Heart right ventricle (tissue), 16 donors: ENCODE measurements at regions of chr9 and their contacts with region 1.

Region 1: DNA sequence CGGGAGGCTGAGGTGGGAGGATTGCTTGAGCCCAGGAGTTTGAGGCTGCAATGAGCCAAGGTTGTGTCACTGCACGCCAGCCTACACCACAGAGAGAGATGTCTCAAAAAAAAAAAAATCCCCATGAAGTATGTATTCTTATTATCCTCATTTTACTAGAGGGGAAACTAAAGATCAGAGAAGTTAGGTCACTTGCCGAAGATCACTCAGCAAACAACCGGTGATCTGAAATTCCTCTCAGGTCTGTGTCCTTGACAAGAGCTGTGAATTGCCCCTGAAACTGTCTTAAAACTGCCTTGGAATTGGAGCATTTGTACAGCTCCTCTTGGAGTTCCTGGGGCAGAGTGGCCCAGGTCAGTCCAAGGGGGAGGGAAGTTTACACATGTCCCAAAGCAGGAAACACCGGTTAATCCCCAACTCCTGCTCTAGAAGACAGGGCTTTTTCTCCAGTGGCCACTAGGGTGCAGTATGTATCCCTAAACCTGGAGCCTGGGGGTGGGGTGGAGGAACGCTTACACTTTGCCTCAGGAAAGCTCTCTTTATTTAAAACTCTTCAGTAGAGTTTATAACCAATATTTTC is 27.6 kb downstream of the AQP7 start:
- DNase-seq: peak in 1 of 2 donors; percentile 87
- ATAC-seq: peak; percentile 63 to 92 (median 82)
- H3K4me3 ChIP-seq: peak overlapping the region in 6 of 10 donors; percentile 6 to 30 (median 22)
- H3K27ac ChIP-seq: peak overlapping the region in 6 of 10 donors; percentile 2 to 79 (median 54)
- H3K4me1 ChIP-seq: peaks cover 5 to 29% (median 18%) of the 10 kb centered on the region in 9 donors
- H3K27me3 ChIP-seq: no peaks in the 10 kb centered on the region
- CTCF ChIP-seq: peak; percentile 72 to 94 (median 88)

Region 2: DNA sequence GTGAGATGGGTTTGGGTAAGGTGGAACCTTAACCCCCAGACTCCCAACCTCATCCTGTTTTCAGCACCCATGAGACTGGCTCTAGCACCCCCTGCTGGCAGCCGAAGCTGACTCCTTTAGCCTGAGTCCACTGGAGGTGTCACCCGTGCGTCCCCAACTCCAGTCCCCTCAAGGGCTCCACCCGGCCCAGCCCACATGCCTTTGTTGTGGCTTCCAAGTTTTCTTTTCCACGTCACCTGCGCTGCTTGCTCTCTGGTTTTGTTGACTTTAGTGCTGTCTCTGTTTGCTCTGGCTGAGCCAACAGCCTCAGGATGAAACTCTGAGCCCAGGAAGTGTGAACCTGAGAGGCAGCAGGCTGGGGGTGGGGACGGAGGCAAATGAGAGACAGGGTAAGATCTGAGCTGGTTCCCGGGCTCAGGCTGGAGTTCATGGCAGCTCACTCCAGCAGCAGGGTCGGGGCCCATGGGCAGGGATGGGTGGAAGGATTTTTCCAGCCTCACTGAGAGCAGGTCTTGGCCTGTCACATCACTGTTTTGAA is 40.8 kb after region 1 on chr9:
- intact Hi-C with region 1: loop called in 9 of 10 experiments (anchors 1 to 5 kb)
- DNase-seq: peak; percentile 71 to 81
- ATAC-seq: peak; percentile 77 to 89 (median 84)
- H3K4me3 ChIP-seq: no peak overlapping the region
- H3K27ac ChIP-seq: no peak overlapping the region
- H3K4me1 ChIP-seq: peaks cover 4 to 14% (median 8%) of the 10 kb centered on the region in 9 donors
- H3K27me3 ChIP-seq: no peaks in the 10 kb centered on the region
- CTCF ChIP-seq: peak; percentile 42 to 86 (median 79)

Region 3: DNA sequence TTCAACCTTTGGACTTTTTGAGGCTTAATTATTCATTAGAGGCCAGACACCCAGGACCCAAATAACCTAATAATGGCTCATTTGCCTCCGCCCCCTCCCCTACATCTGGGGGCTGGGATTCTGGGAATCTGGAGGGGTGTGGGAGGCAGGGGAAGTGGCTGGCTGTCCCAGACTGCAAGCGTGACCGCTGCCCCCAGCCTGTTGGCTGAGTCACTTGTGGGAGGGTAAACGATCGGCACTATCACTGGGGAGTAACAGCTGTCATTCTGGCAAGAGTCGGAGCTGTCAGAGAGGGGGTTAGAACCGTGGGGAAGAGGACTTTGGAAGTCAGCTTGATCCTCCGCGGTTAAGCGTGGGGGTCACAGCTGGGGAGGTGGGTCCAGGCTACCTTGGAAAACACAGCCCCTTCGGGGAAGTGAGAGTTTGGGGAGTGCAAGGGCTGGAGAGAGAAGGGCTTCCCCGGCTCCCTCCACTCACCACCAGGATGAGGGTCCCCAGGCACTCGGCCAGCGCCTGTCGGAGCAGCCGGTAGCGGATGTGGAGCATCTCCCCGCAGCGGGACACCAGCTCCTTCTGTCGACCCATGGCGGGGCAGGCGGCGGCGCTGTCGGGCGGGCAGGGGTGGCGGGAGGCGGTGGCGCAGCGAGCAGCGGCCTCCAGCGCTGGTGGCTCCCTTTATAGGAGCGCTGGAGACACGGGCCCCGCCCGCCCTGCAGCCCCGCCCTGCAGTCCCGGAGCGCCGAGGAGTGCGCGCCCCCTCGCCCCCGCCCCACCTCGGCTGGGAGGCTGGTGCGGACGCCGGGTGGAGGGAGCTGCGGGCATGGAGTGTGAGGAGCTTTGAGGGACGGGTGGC is 72.4 kb after region 1 on chr9 and contains the start of gene AQP3:
- intact Hi-C with region 1: loop called in 1 of 10 experiments (anchors 5 kb)
- DNase-seq: peak; percentile 61 to 74
- ATAC-seq: peak; percentile 84 to 91 (median 87)
- H3K4me3 ChIP-seq: peak within 1 kb of the TSS; percentile 27 to 65 (median 59)
- H3K27ac ChIP-seq: peak within 1 kb of the TSS in 9 of 10 donors; percentile 49 to 80 (median 61)
- H3K4me1 ChIP-seq: peaks cover 0 to 25% (median 19%) of the 10 kb centered on the region in 9 donors
- H3K27me3 ChIP-seq: peaks cover 0 to 12% (median 0%) of the 10 kb centered on the region in 7 donors
- CTCF ChIP-seq: peak in 7 of 9 donors; percentile 17 to 62 (median 44)
- total RNA-seq, gene AQP3: 1.9 to 37.2 (median 10.1) TPM

Region 4: DNA sequence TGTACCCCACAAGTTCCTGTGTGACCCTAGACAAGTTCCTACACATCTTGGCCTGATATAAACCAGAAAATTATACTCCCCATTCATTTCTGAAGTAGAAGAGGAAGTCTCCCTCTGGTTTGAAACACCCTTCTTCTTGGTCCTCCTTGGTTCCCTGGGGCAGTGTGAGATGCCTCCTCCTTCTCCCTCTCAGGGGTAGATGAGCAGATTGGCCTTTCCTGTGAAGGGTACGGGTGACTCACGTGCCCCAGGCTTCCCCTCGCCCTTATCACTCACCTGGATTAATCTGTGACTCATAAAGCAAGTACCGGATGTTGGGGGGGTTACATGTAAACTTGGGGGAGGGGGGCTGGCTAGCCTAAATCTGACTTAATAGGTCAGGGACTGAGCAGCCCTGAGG is 83.7 kb after region 1 on chr9:
- intact Hi-C with region 1: loop called in 2 of 10 experiments (anchors 5 to 10 kb)
- DNase-seq: no peak
- ATAC-seq: no peak
- H3K4me3 ChIP-seq: no peak overlapping the region
- H3K27ac ChIP-seq: no peak overlapping the region
- H3K4me1 ChIP-seq: peaks cover 0 to 7% (median 0%) of the 10 kb centered on the region in 9 donors
- H3K27me3 ChIP-seq: no peaks in the 10 kb centered on the region
- CTCF ChIP-seq: no peak

Region 5: DNA sequence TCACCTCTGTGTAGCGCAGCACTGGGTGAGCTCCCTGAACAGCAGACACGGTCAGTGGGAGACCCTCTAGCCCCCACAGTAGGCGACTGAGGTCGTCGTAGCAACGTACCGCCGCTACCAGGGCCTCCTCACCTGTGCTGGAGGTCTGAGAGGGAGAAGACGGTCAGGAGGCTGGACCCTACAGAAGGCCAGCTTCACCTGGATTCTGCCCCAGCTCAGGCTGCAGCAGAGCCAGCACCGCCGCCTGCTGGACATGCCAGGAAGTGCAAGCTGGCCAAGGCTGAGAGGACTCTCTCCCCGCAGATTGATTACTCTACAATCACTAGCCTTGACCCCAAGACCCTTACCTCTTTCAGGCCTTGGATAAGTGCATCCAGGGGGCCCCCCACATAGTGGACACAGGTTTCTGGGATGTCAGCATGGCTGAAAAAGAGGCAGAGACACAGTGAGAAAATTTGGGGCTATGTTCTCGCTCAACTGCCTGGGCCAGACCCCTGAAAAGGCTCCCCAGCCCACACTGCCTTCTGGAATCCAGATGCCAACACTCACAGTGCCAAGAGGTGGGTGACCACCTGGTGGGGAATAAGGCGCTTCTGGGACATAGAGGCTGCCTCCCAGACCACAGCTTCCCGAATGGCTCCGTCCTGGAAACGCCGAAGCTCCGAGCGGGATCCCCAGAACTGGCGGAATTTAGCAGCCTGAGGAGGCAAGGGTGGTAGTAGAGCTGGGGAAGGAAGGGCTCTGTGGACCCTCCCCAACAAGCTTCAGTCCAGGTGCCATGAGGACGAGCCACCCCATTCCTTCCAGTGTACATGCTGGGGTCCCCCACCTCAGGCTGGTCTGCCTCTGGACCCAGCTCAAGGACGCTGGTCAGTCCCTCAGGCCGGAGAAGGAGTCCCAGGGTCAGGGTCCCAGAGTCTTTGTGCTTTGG is 92.1 kb after region 1 on chr9:
- intact Hi-C with region 1: loop called in 7 of 10 experiments (anchors 1 to 10 kb)
- DNase-seq: peak; percentile 45 to 71
- ATAC-seq: peak; percentile 25 to 81 (median 50)
- H3K4me3 ChIP-seq: no peak overlapping the region
- H3K27ac ChIP-seq: no peak overlapping the region
- H3K4me1 ChIP-seq: peaks cover 0 to 2% (median 0%) of the 10 kb centered on the region in 9 donors
- H3K27me3 ChIP-seq: no peaks in the 10 kb centered on the region
- CTCF ChIP-seq: peak; percentile 85 to 96 (median 93)